ENCODE measurements at regions of chr11 and their contacts with region 1.

Region 1: DNA sequence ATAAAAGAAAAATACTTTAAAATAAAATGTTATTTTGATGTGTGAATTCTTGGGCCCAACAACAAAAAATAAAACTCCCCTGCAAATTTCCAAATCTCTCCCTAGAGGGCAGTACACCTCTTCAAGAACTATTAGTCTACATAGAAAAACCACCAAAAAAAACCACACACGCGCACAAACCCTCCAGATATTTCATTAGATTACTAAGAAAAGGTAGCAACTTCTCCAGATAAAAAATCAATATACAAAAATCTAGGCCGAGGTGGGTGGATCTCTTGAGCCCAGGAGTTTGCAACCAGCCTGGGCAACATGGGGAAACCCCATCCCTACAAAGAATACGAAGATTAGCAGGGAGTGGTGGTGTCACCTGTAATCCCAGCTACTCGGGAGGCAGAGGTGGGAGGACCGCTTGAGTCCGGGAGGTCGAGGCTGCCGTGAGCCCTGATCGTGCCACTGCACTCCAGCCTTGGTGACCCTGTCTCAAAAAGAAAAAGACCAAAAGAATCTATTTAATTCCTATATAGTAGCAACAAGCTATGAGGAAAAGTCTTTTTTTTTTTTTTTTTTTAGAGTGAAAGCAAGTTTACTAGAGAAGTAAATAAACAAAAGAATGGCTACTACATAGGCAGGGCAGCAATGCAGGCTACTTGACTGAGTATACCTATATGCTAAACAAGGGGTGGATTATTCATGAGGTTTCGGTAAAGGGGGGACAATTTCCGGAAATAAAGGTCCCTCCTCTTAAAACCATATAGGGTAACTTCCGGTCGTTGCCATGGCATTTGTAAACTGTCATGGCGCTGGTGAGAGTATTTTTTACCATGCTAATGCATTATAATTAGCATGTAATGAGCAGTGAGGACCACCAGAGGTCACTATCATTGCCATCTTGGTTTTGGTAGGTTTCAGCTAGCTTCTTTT is 13.1 kb downstream of the B3GNT6 start:
- DNase-seq: peak; percentile 82
- ATAC-seq: peak; percentile 95
- H3K4me3 Mint-ChIP-seq: peak overlapping the region; percentile 64
- H3K27ac Mint-ChIP-seq: peak overlapping the region; percentile 62
- H3K4me1 Mint-ChIP-seq: peaks cover 12% of the 10 kb centered on the region
- H3K27me3 Mint-ChIP-seq: no peaks in the 10 kb centered on the region

Region 2: GRCh38 chr11:76734456-76735420 is 312.5 kb before region 1 on chr11:
- CTCF ChIA-PET with region 1: no interaction called
- POLR2A ChIA-PET with region 1: no interaction called
- intact Hi-C with region 1: loop called (anchors 1 to 10 kb)
- DNase-seq: no peak
- ATAC-seq: no peak
- H3K4me3 Mint-ChIP-seq: no peak overlapping the region
- H3K27ac Mint-ChIP-seq: no peak overlapping the region
- H3K4me1 Mint-ChIP-seq: no peaks in the 10 kb centered on the region
- H3K27me3 Mint-ChIP-seq: no peaks in the 10 kb centered on the region

Region 3: DNA sequence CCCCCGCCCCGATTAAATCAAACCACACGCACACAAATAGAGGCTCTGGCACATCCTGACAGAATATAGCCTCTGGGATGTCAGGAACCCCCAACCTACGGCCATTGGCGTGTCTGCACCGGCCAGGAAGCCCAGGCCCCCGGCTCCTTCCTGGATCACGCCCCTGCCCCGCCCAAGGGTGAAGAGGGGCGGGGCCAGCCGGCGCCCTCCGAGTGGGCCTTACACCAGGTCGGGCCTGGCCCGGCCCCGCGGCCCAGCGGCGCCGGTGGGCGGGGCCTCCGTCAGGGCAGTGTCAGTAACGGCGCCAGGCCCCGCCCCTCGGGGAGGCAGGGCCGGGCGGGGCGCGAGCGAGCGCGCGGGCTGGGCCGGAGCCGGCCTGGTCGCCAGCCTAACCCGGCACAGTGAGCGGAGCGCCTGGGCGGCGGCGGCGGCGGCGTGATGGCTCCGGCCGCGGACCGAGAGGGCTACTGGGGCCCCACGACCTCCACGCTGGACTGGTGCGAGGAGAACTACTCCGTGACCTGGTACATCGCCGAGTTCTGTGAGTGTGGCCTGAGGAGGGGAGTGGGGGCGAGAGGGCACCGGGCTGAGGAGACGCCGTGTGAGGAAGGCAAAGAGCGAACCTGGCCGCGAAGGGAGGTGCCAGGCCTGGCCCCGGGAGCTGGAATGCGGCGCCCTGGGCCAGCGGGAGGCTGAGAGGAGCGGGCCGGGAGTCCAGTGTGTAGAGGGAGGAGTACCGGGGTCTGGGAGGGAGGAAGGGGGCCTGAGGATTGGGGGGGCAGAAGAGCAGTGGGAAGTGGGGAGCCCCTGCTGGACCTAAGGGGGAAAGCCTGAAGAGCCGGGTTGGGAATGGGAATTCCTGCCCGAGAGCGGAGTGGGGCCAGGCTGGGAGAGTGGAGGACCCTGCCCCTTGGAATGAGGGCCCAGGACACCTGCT is 186.5 kb before region 1 on chr11 and contains the start of gene ACER3:
- CTCF ChIA-PET with region 1: interaction called, 4 read pairs
- POLR2A ChIA-PET with region 1: interaction called, 3 read pairs
- intact Hi-C with region 1: loop called in 1 of 2 experiments (anchors 1 kb)
- DNase-seq: peak; percentile 94
- ATAC-seq: peak; percentile 99
- H3K4me3 Mint-ChIP-seq: peak within 1 kb of the TSS; percentile 72
- H3K27ac Mint-ChIP-seq: peak within 1 kb of the TSS; percentile 70
- H3K4me1 Mint-ChIP-seq: peaks cover 20% of the 10 kb centered on the region
- H3K27me3 Mint-ChIP-seq: no peaks in the 10 kb centered on the region
- total RNA-seq, gene ACER3: 8.9 to 10.3 TPM

Region 4: DNA sequence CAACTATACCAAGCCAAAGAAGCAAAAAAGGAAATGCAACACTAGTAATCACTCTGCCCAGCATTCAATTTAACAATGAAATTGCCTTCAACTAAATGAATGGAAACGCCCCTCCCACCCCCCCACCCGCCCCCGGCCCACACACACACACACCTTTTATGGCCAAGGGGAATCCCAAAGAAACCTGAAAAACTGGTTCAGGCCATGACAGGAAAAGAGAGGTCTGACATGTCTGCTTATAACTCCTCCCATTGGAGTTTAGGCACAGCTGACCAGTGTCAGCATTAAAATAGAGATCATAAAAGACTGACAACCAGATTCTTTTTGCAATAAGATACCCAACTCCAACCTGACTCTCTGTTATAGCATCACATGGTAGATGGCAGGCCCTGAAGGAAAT is 143.9 kb before region 1 on chr11:
- CTCF ChIA-PET with region 1: no interaction called
- POLR2A ChIA-PET with region 1: no interaction called
- intact Hi-C with region 1: no loop called
- DNase-seq: no peak
- ATAC-seq: no peak
- H3K4me3 Mint-ChIP-seq: no peak overlapping the region
- H3K27ac Mint-ChIP-seq: no peak overlapping the region
- H3K4me1 Mint-ChIP-seq: no peaks in the 10 kb centered on the region
- H3K27me3 Mint-ChIP-seq: no peaks in the 10 kb centered on the region

Region 5: DNA sequence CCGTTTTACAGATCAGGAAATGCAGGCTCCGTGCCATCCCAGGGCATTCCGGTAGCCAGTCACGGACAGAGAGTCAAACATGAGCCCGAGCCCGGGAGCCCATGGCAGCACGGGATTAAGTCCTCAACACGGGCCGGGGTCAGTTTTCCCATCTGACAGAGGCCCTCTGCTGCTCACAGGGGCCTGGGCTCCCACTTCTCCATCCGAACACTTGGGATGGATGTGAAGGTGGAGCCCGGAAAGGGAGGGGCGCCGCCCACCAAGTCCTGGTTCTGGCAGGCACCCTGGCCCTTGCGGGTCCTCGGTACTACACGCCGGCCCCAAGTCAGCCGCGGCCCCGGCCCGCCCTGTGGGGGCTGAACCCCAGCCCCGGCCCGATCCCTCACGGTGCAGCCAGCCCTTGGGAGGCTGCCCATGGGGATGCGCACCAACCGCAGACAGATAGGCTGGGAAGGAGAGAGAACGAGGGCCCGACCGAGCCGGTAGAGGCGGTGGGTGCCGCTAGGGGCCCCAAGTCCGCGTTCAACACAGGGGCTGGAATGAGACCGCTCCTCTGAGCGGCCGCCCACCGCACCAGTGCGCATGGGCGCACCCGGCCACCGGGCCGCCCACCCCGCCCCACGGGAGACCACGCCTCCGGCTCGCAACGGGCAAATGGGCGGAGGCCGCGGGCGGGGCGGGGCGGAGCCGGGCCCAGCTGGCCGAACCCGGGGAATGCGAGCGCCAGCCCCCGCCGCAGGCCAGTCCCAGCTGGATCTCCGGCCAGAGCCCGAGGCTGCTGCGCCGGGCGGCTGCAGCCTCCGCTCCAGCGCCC is 19.2 kb after region 1 on chr11 and contains the start of gene CAPN5:
- CTCF ChIA-PET with region 1: interaction called, 24 read pairs
- POLR2A ChIA-PET with region 1: interaction called, 3 read pairs
- intact Hi-C with region 1: loop called (anchors 1 kb)
- DNase-seq: peak; percentile 91
- ATAC-seq: peak; percentile 97
- H3K4me3 Mint-ChIP-seq: peak within 1 kb of the TSS; percentile 75
- H3K27ac Mint-ChIP-seq: peak within 1 kb of the TSS; percentile 78
- H3K4me1 Mint-ChIP-seq: peaks cover 4% of the 10 kb centered on the region
- H3K27me3 Mint-ChIP-seq: no peaks in the 10 kb centered on the region
- total RNA-seq, gene CAPN5: 0.62 to 0.76 TPM

Region 6: GRCh38 chr11:77113382-77114088 is 66.3 kb after region 1 on chr11:
- CTCF ChIA-PET with region 1: interaction called, 3 read pairs
- POLR2A ChIA-PET with region 1: no interaction called
- intact Hi-C with region 1: loop called in 1 of 2 experiments (anchors 1 kb)
- DNase-seq: peak; percentile 54
- ATAC-seq: no peak
- H3K4me3 Mint-ChIP-seq: no peak overlapping the region
- H3K27ac Mint-ChIP-seq: no peak overlapping the region
- H3K4me1 Mint-ChIP-seq: peaks cover 3% of the 10 kb centered on the region
- H3K27me3 Mint-ChIP-seq: no peaks in the 10 kb centered on the region

Region 7: DNA sequence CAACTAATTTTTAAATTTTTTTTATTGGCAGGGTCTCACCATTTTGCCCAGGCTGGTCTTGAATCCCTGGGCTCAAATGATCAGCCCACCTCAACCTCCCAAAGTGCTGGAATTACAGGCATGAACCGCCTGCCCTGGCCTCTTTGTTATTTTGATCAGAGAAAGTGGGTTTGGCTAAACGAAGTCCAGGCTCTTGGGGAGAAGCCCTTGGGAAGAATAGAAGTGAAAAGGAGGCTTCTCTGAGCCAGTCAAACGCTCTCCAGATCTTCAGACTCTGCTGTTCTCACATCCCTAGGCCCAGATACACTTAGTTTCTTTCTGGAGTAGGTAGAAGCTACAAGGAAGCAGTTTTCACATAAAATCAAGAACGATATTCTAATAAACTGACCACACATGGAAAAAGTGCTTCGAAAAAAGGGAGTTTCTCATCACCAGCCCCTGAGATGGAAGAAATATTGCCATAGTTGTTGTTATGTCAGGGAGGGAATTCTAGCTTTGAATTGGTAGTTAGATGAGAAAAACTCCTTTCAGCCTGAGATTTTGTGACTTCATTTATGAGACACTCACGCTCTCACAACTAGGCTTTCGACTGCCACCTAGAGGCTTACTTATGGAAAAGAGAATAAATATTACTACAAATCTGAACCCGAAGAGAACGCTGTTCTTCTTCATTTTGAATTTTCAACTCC is 500.7 kb after region 1 on chr11:
- CTCF ChIA-PET with region 1: interaction called, 4 read pairs
- POLR2A ChIA-PET with region 1: no interaction called
- intact Hi-C with region 1: loop called in 1 of 2 experiments (anchors 2 kb)
- DNase-seq: peak; percentile 40
- ATAC-seq: no peak
- H3K4me3 Mint-ChIP-seq: no peak overlapping the region
- H3K27ac Mint-ChIP-seq: no peak overlapping the region
- H3K4me1 Mint-ChIP-seq: peaks cover 2% of the 10 kb centered on the region
- H3K27me3 Mint-ChIP-seq: no peaks in the 10 kb centered on the region

Measured in activated CD4-positive, alpha-beta T cell treated with anti-CD3 and anti-CD28 coated beads for 36 hours (primary cell).